GM12878 (cell line): ENCODE measurements at regions of chr3 and their contacts with region 1.

Region 1: GRCh38 chr3:124063197-124063909 is 71.4 kb upstream of the ROPN1 start:
- DNase-seq: no peak
- ATAC-seq: no peak
- H3K4me3 ChIP-seq: no peak overlapping the region
- H3K27ac ChIP-seq: no peak overlapping the region
- H3K4me1 ChIP-seq: no peaks in the 10 kb centered on the region
- H3K27me3 ChIP-seq: peaks cover 3 to 4% of the 10 kb centered on the region in 2 experiments; a peak in 3 of 4 replicates
- CTCF ChIP-seq: no peak
- EP300 ChIP-seq: no peak
- POLR2A ChIP-seq: no peak
- RAD21 ChIP-seq: no peak

Region 2: GRCh38 chr3:124078953-124079911 is 15.9 kb after region 1 on chr3:
- CTCF ChIA-PET with region 1: interaction called, 5 read pairs
- POLR2A ChIA-PET with region 1: no interaction called
- RAD21 ChIA-PET with region 1: no interaction called
- SMC1A ChIA-PET with region 1: interaction called, 12 read pairs
- in situ Hi-C with region 1: no loop called
- intact Hi-C with region 1: no loop called
- DNase-seq: no peak
- ATAC-seq: peak; percentile 64; the same call in 2 of the 3 replicates
- H3K4me3 ChIP-seq: no peak overlapping the region
- H3K27ac ChIP-seq: no peak overlapping the region
- H3K4me1 ChIP-seq: no peaks in the 10 kb centered on the region
- H3K27me3 ChIP-seq: peaks cover 0 to 5% of the 10 kb centered on the region in 2 experiments; a peak in 2 of 4 replicates
- CTCF ChIP-seq: peak; percentile 53 to 63 (median 59)
- EP300 ChIP-seq: no peak
- POLR2A ChIP-seq: no peak
- RAD21 ChIP-seq: peak; percentile 70

Region 3: DNA sequence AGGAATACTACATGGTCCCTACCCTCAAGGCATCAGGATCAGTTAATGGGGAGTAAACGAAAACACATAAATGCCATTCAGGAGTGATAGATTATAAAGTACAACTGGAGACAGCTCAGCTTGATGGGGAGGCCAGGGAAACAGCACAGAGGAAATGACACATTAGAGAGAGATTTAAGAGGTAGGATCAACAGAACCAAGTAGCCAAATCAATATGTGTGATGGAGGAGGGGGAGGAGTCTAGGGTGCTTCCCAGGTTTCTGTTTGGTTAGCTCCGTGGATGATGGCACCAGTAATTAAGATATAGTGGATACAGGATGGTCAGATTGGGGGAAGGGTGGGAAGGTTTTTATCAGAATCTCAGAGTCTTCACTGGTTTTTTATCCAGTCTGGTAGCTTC is 158.1 kb after region 1 on chr3:
- CTCF ChIA-PET with region 1: no interaction called
- POLR2A ChIA-PET with region 1: no interaction called
- RAD21 ChIA-PET with region 1: no interaction called
- SMC1A ChIA-PET with region 1: no interaction called
- in situ Hi-C with region 1: no loop called
- intact Hi-C with region 1: no loop called
- DNase-seq: no peak
- ATAC-seq: no peak
- H3K4me3 ChIP-seq: no peak overlapping the region
- H3K27ac ChIP-seq: no peak overlapping the region
- H3K4me1 ChIP-seq: no peaks in the 10 kb centered on the region
- H3K27me3 ChIP-seq: no peaks in the 10 kb centered on the region; a peak in 2 of 4 replicates
- CTCF ChIP-seq: no peak
- EP300 ChIP-seq: no peak
- POLR2A ChIP-seq: no peak
- RAD21 ChIP-seq: no peak